ENCODE measurements at regions of chr10 and their contacts with region 1.

Region 1: DNA sequence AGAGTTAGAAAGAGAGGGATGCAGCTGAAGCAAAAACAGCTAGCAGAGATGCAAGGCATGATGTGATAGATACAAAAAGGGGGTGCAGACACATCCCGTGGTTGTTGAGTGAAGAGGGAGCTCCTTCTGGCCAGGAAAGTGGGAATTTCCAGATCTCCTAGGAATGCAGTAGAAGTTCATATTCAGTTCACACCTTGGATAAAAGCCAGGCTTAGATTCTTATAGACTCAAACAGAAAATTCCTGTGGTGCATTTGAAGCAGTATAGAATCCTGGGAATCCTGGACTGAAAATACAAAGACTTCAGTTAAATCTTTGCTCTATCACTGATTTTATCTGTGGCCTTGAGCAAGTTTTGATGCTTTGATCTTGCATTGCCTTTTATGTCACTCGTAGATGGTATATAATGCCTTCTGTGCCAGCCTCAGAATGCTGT is 33.9 kb downstream of the SGPL1 start:
- DNase-seq: no peak
- H3K4me3 Mint-ChIP-seq: no peak overlapping the region
- H3K27ac Mint-ChIP-seq: no peak overlapping the region
- H3K4me1 Mint-ChIP-seq: peaks cover 30% of the 10 kb centered on the region
- H3K27me3 Mint-ChIP-seq: no peaks in the 10 kb centered on the region

Region 2: DNA sequence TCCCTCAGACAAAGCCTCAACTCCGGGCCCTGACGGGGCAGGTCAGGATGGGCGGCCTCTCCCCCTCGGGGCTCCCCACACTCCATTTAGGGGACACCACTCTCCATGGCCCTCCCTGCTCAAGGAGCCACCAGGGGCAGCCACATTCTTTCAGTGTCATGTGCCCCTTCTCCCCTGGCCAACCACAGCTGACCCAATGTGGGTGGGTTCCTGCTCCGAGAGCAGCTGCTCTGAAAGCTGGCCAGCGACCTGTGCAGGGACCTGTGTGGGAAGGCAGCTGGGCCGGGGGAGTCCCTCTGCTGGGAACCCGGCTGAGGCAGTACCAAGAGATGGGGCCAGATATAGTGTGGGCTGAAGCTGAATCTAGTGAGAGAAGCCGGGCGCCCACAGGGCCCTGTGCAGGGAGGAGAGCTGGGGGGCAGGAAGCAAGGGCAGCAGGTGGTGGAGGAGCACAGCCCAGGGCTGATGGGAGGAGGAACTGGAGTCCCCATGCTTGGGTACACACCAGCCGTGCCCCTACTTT is 525.2 kb before region 1 on chr10:
- CTCF ChIA-PET with region 1: no interaction called
- intact Hi-C with region 1: no loop called
- DNase-seq: no peak
- H3K4me3 Mint-ChIP-seq: no peak overlapping the region
- H3K27ac Mint-ChIP-seq: no peak overlapping the region
- H3K4me1 Mint-ChIP-seq: peaks cover 14% of the 10 kb centered on the region
- H3K27me3 Mint-ChIP-seq: no peaks in the 10 kb centered on the region

Region 3: DNA sequence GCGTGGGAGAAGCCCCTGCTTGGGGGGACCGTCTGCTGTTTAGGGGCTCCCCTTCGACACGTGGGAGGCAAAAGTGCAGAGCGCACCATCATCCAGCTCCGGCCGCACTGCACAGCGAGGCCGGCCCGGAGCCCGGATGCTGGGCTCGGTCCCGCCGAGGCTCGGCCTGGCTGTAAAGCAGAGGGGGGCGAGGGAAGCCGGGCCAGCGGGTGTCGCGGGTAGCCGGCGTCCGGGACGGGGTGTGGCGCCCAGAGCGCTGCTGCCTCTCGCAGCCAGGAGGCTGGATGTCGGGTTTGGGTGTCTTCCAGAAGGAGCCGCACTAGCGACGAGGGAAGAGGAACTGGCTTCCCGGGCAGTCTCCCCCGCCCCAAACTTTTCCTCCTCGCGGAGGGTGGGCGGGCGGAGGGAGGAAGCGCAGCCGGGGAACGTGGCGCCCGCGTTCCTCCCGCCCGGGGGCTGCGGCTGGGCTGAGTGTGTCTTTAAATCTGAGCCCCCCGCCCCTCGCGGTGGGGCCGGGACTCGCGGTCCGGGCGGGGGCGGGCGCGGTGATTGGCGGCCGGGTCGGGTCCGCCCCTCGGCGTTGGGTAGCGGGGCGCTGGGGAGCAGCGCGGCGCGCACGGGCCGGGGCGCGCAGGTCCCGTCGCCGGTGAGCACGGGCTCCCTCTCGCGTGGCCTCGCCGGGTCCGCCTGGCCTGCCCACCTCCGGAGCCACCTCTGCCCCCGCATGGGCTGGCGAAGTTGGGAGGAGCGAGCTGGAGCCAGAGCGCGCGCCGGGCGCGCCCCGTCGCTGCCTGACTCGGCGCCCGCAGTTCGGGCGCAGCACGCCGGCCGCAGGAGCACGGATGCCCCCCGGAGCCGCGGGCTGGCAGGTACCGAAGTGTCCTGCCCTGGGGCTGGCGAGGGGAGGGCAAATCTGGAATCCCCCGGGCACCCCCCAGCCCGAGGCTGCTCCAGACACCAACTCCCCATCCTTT is 371.1 kb before region 1 on chr10 and contains the start of gene PALD1:
- CTCF ChIA-PET with region 1: no interaction called
- intact Hi-C with region 1: loop called (anchors 5 kb)
- DNase-seq: peak; percentile 42
- H3K4me3 Mint-ChIP-seq: peak within 1 kb of the TSS; percentile 74
- H3K27ac Mint-ChIP-seq: peak within 1 kb of the TSS; percentile 41
- H3K4me1 Mint-ChIP-seq: peaks cover 43% of the 10 kb centered on the region
- H3K27me3 Mint-ChIP-seq: peaks cover 29% of the 10 kb centered on the region
- total RNA-seq, gene PALD1: 0.69 TPM

Region 4: DNA sequence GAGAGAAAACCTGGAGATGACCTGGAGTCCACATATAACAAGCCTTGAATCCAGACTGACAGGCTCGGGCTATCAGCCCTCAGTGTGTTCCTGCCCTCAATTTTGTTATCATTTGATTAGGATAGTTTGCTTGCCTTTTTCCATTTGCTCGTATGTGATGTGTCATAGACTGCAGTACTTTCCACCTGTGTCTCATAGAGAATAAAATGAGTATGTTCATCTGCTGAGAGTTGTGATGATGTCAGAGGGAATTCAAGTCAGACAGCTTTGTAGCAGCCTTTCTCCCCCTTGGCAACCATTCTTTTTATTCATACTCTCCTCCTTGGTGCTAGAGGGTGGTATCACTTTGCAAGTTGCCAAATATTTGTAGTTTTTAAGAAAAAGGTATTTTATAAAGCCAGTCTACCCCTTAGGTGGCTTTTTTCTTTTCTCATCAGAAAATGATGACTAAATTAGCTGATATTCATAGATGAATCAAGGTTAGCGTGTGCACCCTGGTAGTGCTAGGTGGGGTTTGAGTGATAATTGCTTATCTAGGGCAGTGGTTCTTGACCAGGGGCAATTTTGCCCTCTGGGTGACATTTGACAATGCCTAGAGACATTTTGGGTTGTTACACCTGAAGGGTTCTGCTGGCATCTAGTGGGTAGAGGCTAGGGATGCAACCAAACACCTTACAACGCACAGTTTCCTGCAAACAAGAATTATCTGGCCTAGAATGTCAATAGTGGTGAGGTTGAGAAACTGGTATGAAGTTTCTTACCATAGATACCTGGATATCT is 28.4 kb before region 1 on chr10:
- CTCF ChIA-PET with region 1: interaction called, 4 read pairs
- intact Hi-C with region 1: loop called (anchors 1 kb)
- DNase-seq: peak; percentile 41
- H3K4me3 Mint-ChIP-seq: no peak overlapping the region
- H3K27ac Mint-ChIP-seq: peak overlapping the region; percentile 61
- H3K4me1 Mint-ChIP-seq: peaks cover 51% of the 10 kb centered on the region
- H3K27me3 Mint-ChIP-seq: no peaks in the 10 kb centered on the region

Region 5: GRCh38 chr10:70832852-70833528 is 16.6 kb before region 1 on chr10:
- CTCF ChIA-PET with region 1: no interaction called
- intact Hi-C with region 1: loop called (anchors 1 kb)
- DNase-seq: peak; percentile 20
- H3K4me3 Mint-ChIP-seq: no peak overlapping the region
- H3K27ac Mint-ChIP-seq: peak overlapping the region; percentile 57
- H3K4me1 Mint-ChIP-seq: peaks cover 45% of the 10 kb centered on the region
- H3K27me3 Mint-ChIP-seq: no peaks in the 10 kb centered on the region